ENCODE measurements at regions of chr6 and their contacts with region 1.

Region 1: GRCh38 chr6:53492860-53493634 is 51.9 kb downstream of the GCLC start:
- DNase-seq: peak; percentile 74
- H3K4me3 Mint-ChIP-seq: peak overlapping the region; percentile 49
- H3K27ac Mint-ChIP-seq: no peak overlapping the region
- H3K4me1 Mint-ChIP-seq: peaks cover 29% of the 10 kb centered on the region
- H3K27me3 Mint-ChIP-seq: no peaks in the 10 kb centered on the region
- CTCF ChIP-seq: peak; percentile 71

Region 2: DNA sequence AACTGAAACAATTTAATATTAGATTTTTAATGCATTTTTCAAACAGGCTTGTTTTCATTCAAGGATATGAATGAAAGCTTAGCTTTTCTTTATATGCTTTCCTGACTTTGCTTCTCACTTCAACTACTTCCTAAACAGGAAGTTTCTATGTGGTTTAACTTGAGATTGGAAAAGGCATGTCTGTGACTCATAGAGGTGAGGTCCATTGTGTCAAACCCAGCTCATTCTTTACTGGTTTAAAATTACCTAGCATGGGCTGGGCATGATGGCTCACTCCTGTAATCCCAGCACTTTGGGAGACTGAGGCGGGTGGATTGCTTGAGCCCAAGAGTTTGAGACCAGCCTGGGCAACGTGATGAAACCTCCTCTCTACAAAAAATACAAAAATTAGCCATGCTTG is 1038.5 kb before region 1 on chr6:
- CTCF ChIA-PET with region 1: no interaction called
- POLR2A ChIA-PET with region 1: no interaction called
- intact Hi-C with region 1: no loop called
- DNase-seq: peak; percentile 45
- H3K4me3 Mint-ChIP-seq: no peak overlapping the region
- H3K27ac Mint-ChIP-seq: peak overlapping the region; percentile 41
- H3K4me1 Mint-ChIP-seq: no peaks in the 10 kb centered on the region
- H3K27me3 Mint-ChIP-seq: no peaks in the 10 kb centered on the region
- CTCF ChIP-seq: no peak

Region 3: GRCh38 chr6:53375847-53376246 is 117.2 kb before region 1 on chr6:
- CTCF ChIA-PET with region 1: no interaction called
- POLR2A ChIA-PET with region 1: no interaction called
- intact Hi-C with region 1: no loop called
- DNase-seq: no peak
- H3K4me3 Mint-ChIP-seq: no peak overlapping the region
- H3K27ac Mint-ChIP-seq: no peak overlapping the region
- H3K4me1 Mint-ChIP-seq: no peaks in the 10 kb centered on the region
- H3K27me3 Mint-ChIP-seq: no peaks in the 10 kb centered on the region
- CTCF ChIP-seq: no peak

Region 4: GRCh38 chr6:53391170-53391569 is 101.9 kb before region 1 on chr6:
- CTCF ChIA-PET with region 1: no interaction called
- POLR2A ChIA-PET with region 1: no interaction called
- intact Hi-C with region 1: no loop called
- DNase-seq: no peak
- H3K4me3 Mint-ChIP-seq: no peak overlapping the region
- H3K27ac Mint-ChIP-seq: no peak overlapping the region
- H3K4me1 Mint-ChIP-seq: no peaks in the 10 kb centered on the region
- H3K27me3 Mint-ChIP-seq: no peaks in the 10 kb centered on the region
- CTCF ChIP-seq: no peak

Region 5: DNA sequence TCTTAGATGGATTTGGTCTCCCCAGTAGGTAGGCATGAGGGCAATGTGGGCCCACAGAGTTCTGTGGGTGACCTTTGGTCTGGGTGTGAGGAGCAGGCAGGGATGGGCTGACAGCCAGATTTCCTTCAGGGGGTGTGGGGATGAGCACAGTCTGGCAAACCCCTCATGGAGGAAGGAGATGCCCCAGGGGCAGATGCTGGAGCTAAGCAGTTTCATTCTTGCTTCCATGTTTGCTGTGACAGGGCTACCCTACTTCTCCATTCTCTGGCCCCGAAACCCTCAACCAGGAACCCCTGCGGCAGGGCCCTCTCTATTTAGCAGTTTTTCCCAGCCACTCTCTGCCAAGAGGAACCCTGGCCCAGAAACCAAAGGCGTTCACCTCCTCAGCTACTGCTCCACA is 11.5 kb after region 1 on chr6:
- CTCF ChIA-PET with region 1: interaction called, 15 read pairs
- POLR2A ChIA-PET with region 1: interaction called, 3 read pairs
- intact Hi-C with region 1: no loop called
- DNase-seq: no peak
- H3K4me3 Mint-ChIP-seq: no peak overlapping the region
- H3K27ac Mint-ChIP-seq: peak overlapping the region; percentile 39
- H3K4me1 Mint-ChIP-seq: no peaks in the 10 kb centered on the region
- H3K27me3 Mint-ChIP-seq: no peaks in the 10 kb centered on the region
- CTCF ChIP-seq: no peak

Region 6: GRCh38 chr6:53544470-53545308 is 51.6 kb after region 1 on chr6 and contains the start of gene GCLC:
- CTCF ChIA-PET with region 1: interaction called, 20 read pairs
- POLR2A ChIA-PET with region 1: interaction called, 19 read pairs
- intact Hi-C with region 1: loop called (anchors 1 kb)
- DNase-seq: peak; percentile 96
- H3K4me3 Mint-ChIP-seq: peak within 1 kb of the TSS; percentile 93
- H3K27ac Mint-ChIP-seq: peak within 1 kb of the TSS; percentile 66
- H3K4me1 Mint-ChIP-seq: peaks cover 43% of the 10 kb centered on the region
- H3K27me3 Mint-ChIP-seq: no peaks in the 10 kb centered on the region
- CTCF ChIP-seq: peak; percentile 77
- total RNA-seq, gene GCLC: 74.8 and 108 TPM in 2 replicates

Region 7: DNA sequence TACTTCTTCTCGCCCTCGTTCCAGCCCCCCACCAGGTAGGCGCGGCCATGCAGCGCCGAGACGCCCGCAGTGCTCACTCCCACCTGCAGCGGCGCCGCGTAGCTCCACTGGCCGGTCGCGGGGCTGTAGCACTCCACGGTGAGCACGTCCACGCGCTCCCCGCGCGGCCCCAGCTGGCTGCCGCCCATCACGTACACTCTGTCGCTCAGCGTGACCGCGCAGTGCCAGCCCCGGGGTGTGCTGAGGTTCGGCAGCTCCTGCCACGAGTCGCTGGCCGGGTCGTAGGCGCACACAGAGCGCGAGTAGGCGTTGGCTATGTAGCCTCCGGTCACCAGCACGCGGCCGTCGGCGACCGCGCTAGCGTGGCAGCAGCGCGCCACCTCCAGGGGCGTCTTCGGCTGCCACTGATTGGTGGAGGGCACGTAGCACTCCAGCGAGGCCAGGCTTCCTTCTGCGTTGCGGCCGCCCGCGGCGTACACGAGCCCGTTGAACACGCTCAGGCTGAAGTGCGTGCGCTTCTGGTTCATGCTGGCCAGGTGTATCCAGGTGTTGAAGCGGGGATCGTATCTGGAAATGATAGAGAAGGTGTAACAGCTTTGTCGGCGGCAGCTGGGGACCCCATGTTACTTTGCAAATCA is 158.8 kb after region 1 on chr6:
- CTCF ChIA-PET with region 1: interaction called, 102 read pairs
- POLR2A ChIA-PET with region 1: interaction called, 45 read pairs
- intact Hi-C with region 1: loop called (anchors 1 kb)
- DNase-seq: peak; percentile 86
- H3K4me3 Mint-ChIP-seq: peak overlapping the region; percentile 94
- H3K27ac Mint-ChIP-seq: peak overlapping the region; percentile 84
- H3K4me1 Mint-ChIP-seq: peaks cover 34% of the 10 kb centered on the region
- H3K27me3 Mint-ChIP-seq: no peaks in the 10 kb centered on the region
- CTCF ChIP-seq: peak; percentile 23

Region 8: GRCh38 chr6:53707108-53707897 is 214.3 kb after region 1 on chr6:
- CTCF ChIA-PET with region 1: interaction called, 11 read pairs
- POLR2A ChIA-PET with region 1: no interaction called
- intact Hi-C with region 1: no loop called
- DNase-seq: no peak
- H3K4me3 Mint-ChIP-seq: no peak overlapping the region
- H3K27ac Mint-ChIP-seq: no peak overlapping the region
- H3K4me1 Mint-ChIP-seq: no peaks in the 10 kb centered on the region
- H3K27me3 Mint-ChIP-seq: no peaks in the 10 kb centered on the region
- CTCF ChIP-seq: no peak

Region 9: DNA sequence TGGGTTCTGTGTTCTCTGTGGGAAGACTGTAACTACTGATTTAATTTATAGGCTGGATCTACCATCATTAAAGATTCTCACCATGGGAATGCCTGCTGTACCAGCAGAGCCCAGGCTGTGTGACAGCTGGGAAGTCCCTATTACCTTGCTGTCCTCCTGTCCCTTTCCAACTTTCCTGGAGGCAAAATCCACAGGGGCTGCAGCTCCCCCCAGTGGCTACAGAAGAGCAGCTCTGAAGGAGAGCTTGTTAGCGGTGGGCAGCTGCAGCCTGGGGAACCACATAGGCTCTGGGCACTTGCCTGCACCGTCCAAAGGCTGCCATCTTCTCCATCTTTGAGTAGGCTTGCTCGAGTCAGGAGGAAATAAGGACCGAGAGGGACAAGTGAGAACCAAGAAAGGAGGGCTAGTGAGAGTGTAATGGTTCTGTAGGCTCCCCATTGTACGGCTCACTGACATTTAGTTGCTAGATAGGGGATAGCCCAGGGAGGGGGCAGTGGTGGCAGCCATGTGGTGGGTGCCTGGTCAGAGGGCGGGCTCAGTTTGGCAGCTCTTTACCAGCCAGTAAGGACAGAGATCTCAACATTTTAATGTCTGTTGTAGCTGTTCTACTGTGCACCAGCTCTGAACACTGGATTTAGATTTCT is 463.1 kb after region 1 on chr6:
- CTCF ChIA-PET with region 1: interaction called, 3 read pairs
- POLR2A ChIA-PET with region 1: no interaction called
- intact Hi-C with region 1: loop called (anchors 1 kb)
- DNase-seq: peak; percentile 70
- H3K4me3 Mint-ChIP-seq: no peak overlapping the region
- H3K27ac Mint-ChIP-seq: no peak overlapping the region
- H3K4me1 Mint-ChIP-seq: no peaks in the 10 kb centered on the region
- H3K27me3 Mint-ChIP-seq: no peaks in the 10 kb centered on the region
- CTCF ChIP-seq: peak; percentile 67

Measured in MCF 10A (cell line).